ENCODE measurements at regions of chr9 and their contacts with region 1.

Region 1: GRCh38 chr9:22008736-22009562 is at the start of gene CDKN2B:
- DNase-seq: peak; percentile 72
- H3K4me3 ChIP-seq: peak within 1 kb of the TSS; percentile 81
- CTCF ChIP-seq: peak; percentile 84

Region 2: GRCh38 chr9:21968331-21969010 is 40.5 kb before region 1 on chr9:
- CTCF ChIA-PET with region 1: interaction called, 30 read pairs
- POLR2A ChIA-PET with region 1: interaction called, 5 read pairs
- DNase-seq: no peak
- H3K4me3 ChIP-seq: peak overlapping the region; percentile 36
- CTCF ChIP-seq: no peak

Region 3: GRCh38 chr9:22022396-22022795 is 13.4 kb after region 1 on chr9:
- CTCF ChIA-PET with region 1: interaction called, 20 read pairs
- POLR2A ChIA-PET with region 1: interaction called, 4 read pairs
- DNase-seq: no peak
- H3K4me3 ChIP-seq: no peak overlapping the region
- CTCF ChIP-seq: no peak

Region 4: GRCh38 chr9:22052376-22052945 is 43.5 kb after region 1 on chr9:
- CTCF ChIA-PET with region 1: interaction called, 20 read pairs
- POLR2A ChIA-PET with region 1: interaction called, 3 read pairs
- DNase-seq: peak; percentile 76
- H3K4me3 ChIP-seq: no peak overlapping the region
- CTCF ChIP-seq: no peak

Region 5: GRCh38 chr9:22111954-22112247 is 103.0 kb after region 1 on chr9:
- CTCF ChIA-PET with region 1: interaction called, 106 read pairs
- POLR2A ChIA-PET with region 1: interaction called, 17 read pairs
- DNase-seq: no peak
- H3K4me3 ChIP-seq: no peak overlapping the region
- CTCF ChIP-seq: no peak

Region 6: DNA sequence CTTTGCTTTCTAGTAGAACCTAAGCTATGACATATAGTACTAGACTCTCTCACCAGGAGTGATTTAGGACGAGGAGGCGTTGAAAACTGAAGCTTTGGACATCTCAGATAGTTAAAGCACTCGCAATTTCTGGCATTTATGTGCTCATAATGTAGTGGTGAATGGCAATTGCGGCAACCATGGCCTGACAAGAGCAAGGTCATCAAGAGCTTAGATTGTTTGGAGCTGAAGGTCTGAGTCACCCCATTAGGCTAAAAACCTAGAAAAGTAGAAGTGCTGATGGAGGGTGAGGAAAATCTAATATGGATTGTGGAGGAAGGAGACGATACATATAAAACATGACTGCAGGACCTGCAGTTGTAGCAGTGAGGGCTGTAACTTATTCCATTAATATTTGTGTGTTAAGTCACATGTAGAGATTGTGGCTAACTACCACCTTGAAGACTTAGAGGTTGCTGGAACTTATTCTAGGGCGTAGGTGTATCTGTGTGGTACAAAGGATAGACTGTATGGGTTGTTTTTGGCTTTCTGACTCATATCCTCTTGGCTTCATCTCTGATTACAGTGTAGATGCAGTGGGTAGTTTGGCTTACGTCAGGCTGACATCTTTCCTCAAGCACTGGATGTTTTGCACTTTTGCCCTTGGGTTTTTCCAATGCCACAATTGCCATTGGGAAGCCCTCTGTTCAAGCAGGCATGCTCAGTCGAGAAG is 139.0 kb after region 1 on chr9:
- CTCF ChIA-PET with region 1: interaction called, 15 read pairs
- POLR2A ChIA-PET with region 1: interaction called, 3 read pairs
- DNase-seq: no peak
- H3K4me3 ChIP-seq: no peak overlapping the region
- CTCF ChIP-seq: no peak

Region 7: GRCh38 chr9:22244141-22245011 is 235.4 kb after region 1 on chr9:
- CTCF ChIA-PET with region 1: interaction called, 67 read pairs
- POLR2A ChIA-PET with region 1: interaction called, 4 read pairs
- DNase-seq: no peak
- H3K4me3 ChIP-seq: no peak overlapping the region
- CTCF ChIP-seq: peak; percentile 57